ENCODE measurements at regions of chr18 and their contacts with region 1.

Region 1: DNA sequence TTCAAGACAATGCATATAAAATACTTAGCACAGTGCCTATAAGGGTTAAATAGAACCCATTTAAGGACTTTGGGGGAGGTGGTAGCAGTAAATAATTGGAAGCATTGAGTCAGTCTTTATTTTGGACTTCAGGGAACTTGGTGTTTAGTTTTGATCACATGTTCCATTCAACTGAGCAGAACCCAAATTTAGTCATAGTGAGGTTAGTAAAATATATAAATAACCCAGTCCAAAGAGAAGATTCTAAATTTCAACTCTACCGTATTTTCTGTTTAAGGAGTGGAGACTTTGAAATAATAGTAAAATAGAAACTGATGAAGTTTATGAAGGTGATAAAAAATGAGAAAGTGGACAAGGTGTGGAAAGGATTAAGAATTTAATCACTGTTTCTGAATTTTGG is 19.7 kb downstream of the TWSG1 start:
- DNase-seq: peak; percentile 34
- CTCF ChIP-seq: no peak

Region 2: DNA sequence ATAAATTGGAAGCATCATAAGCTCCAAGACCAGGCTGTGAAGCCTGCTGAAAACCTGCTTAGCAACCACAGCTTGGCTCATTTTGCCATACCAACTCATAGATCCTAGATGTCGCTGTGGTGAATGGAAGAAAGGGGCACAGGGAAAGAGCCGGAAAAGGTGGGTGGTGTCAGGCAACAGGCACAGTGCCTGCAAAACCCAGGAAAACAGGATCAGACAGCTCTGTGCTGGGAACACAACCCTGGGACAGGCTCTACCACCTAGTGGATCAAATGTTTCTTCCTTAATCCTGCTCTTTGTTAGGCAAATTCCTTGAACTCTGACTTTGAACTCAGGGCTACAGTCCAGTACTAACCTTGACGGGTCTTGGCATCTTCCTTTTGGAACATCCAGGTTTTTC is 11.9 kb after region 1 on chr18:
- CTCF ChIA-PET with region 1: interaction called, 14 read pairs
- POLR2A ChIA-PET with region 1: no interaction called
- DNase-seq: no peak
- CTCF ChIP-seq: no peak

Region 3: GRCh38 chr18:9792565-9793245 is 438.4 kb after region 1 on chr18:
- CTCF ChIA-PET with region 1: no interaction called
- POLR2A ChIA-PET with region 1: no interaction called
- DNase-seq: peak; percentile 31
- CTCF ChIP-seq: peak; percentile 22